HEK293 (cell line): ENCODE measurements at regions of chr7 and their contacts with region 1.

Region 1: GRCh38 chr7:141014524-141015395 is at the start of gene MRPS33:
- H3K4me3 ChIP-seq: peak within 1 kb of the TSS; percentile 89
- H3K27ac ChIP-seq: no peak within 1 kb of the TSS; the same call in 1 of the 2 replicates
- H3K4me1 ChIP-seq: no peaks in the 10 kb centered on the region; the same call in 1 of the 2 replicates
- CTCF ChIP-seq: peak; percentile 98

Region 2: DNA sequence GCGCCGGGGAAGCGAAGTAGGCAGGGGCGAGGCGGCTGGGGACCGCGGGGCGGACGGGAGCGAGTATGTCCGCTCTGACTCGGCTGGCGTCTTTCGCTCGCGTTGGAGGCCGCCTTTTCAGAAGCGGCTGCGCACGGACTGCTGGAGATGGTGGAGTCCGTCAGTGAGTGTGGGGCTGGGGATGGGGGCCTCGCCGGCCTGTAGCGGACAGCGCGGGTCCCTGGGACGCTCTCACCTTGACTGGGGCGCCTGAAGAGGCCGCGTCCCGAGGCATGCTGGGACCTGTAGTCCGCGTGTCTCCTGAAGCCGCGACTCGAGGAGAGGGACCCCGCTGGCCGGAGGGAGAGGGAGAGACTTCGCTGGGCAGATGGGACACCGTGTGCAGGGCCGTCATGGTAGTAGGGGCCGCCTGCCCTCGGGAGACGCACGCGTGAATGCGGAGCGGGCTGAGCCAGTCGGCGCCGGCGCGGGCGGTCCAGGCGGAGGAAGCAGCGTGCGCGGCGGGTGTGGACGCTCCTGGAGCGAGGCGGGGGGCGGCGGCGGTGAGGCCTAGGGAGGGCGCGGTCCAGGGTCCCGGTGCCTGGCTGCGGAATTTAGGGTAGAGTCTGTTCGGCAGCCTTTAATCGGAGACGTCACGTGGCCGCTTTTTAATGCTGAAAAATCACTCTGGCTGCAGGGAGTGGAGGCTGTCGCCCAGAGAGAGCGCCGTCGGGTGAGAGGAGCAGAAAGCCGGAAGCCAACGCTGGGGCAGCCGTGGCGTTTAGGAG is 317.9 kb before region 1 on chr7 and contains the start of gene NDUFB2:
- CTCF ChIA-PET with region 1: interaction called, 4 read pairs
- POLR2A ChIA-PET with region 1: interaction called, 11 read pairs
- H3K4me3 ChIP-seq: peak within 1 kb of the TSS; percentile 87
- H3K27ac ChIP-seq: peak within 1 kb of the TSS; percentile 79
- H3K4me1 ChIP-seq: no peaks in the 10 kb centered on the region
- CTCF ChIP-seq: peak; percentile 79

Region 3: GRCh38 chr7:141122736-141123135 is 108.0 kb after region 1 on chr7:
- CTCF ChIA-PET with region 1: no interaction called
- POLR2A ChIA-PET with region 1: no interaction called
- H3K4me3 ChIP-seq: no peak overlapping the region
- H3K27ac ChIP-seq: no peak overlapping the region
- H3K4me1 ChIP-seq: no peaks in the 10 kb centered on the region
- CTCF ChIP-seq: no peak

Region 4: GRCh38 chr7:141208539-141208938 is 193.8 kb after region 1 on chr7:
- CTCF ChIA-PET with region 1: no interaction called
- POLR2A ChIA-PET with region 1: no interaction called
- H3K4me3 ChIP-seq: no peak overlapping the region
- H3K27ac ChIP-seq: no peak overlapping the region
- H3K4me1 ChIP-seq: no peaks in the 10 kb centered on the region
- CTCF ChIP-seq: no peak